HCT116 (cell line): ENCODE measurements at regions of chrX and their contacts with region 1.

Region 1: DNA sequence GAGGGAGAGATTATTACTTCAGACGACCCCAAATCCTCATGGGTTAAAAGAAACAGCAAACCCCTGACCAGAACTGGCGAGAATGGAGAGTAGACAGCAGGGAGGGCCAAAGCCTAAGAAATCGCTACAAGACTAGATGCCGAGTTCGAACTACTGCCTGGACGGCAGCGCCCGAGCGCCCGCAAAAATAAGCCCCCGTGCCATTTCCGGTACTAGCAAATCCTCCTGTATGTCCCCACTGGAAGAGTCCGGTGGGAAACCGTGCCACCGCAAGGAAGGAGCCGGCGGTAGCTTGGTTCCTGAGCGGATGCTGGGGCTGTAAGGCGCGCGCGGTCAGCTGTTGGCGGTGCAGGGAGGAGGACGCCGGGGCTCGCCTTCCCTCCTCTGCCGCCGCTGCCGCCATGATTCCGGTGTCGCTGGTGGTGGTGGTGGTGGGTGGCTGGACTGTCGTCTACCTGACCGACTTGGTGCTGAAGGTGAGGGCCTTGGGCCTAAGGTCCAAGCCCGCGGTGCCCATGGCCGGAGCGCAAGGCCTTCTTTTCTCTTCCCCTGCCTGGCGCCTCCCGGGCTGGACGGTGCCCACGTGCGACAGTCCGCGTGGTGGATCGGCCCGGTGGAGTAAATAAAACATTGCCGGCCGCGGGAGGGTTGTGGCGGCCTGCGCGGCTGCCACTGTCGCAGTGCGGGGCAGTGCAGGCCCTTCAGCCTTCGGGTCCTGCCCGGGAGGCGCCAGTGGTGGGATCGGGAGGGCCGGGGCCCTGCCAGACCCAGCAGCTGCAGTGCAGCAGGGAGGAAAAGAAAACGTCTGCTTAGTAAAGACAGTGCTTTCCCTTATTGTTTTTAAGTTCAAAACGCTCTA is at the start of gene MBTPS2:
- DNase-seq: peak; percentile 73
- ATAC-seq: peak; percentile 88
- H3K4me3 ChIP-seq: peak within 1 kb of the TSS; percentile 70 to 73
- H3K27ac ChIP-seq: peak within 1 kb of the TSS; percentile 66
- H3K4me1 ChIP-seq: peaks cover 0 to 10% of the 10 kb centered on the region in 2 experiments; a peak in 1 of 4 replicates
- H3K27me3 ChIP-seq: no peaks in the 10 kb centered on the region
- CTCF ChIP-seq: 0 out of 6 replicates have a peak, but pooled peaks of 1 of the 3 experiments have one; percentile 10
- POLR2A ChIP-seq: no peak
- RAD21 ChIP-seq: peak; percentile 52
- total RNA-seq, gene MBTPS2: 16.9 TPM

Region 2: DNA sequence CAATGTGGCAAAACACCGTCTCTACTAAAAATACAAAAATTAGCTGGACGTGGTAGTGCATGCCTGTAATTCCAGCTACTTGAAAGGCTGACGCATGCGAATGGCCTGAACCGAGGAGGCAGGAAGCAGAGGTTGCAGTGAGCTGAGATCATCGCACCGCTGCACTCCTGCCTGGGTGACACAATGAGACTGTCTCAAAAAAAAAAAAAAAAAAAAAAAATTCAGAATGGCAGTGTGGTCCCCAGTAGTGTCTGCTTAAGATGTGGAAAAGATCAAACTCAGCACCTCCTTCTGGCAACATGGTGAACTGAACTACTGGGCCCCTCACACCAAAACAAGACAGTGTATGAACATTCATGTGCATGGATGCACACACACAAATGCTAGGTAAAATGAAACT is 133.2 kb after region 1 on chrX:
- CTCF ChIA-PET with region 1: no interaction called
- POLR2A ChIA-PET with region 1: no interaction called
- RAD21 ChIA-PET with region 1: no interaction called
- intact Hi-C with region 1: loop called (anchors 2 kb)
- DNase-seq: no peak
- ATAC-seq: peak; percentile 53
- H3K4me3 ChIP-seq: no peak overlapping the region
- H3K27ac ChIP-seq: no peak overlapping the region
- H3K4me1 ChIP-seq: no peaks in the 10 kb centered on the region
- H3K27me3 ChIP-seq: no peaks in the 10 kb centered on the region
- CTCF ChIP-seq: 0 out of 6 replicates have a peak, but pooled peaks of 1 of the 3 experiments have one; percentile 14
- POLR2A ChIP-seq: no peak
- RAD21 ChIP-seq: no peak